ENCODE measurements at regions of chr6 and their contacts with region 1.

Region 1: DNA sequence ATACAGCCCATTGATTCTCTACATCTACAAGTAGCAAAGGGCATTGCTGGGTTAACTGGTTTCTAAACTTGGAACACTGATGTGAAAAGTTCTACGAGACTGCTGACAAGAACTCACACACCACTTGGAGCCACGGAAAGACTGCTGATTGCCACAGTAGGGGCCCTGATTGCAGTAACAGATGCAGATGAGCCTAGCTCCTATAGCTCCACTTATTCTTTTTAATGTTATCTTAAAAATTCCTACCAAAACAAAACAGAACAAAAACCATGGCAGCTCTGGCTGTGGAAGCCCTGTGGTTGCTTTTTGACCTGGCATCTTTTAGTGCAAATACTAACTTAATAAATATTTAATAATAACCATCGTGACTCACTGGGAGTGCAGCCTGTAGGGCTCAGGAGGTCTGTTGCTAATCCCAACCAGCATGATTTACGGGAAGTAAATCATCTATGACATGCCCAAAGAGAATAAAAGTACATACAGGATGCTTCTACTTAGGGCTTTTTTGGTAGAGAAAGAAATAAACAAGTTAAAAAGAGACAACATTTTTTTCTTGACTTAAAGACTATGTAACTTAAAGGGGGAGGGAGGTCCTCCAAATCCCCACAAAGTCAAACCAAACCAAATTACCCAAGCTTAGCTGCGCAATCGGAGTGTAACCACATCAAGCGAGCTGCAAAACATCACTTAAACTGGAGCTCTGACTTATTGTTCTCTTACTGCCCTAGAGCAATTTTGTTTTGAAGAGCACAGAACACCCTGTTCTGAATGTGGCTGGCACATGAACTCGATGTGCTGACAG is 87.2 kb downstream of the FKBP5 start:
- DNase-seq: peak; percentile 82
- ATAC-seq: peak; percentile 84
- H3K4me3 Mint-ChIP-seq: peak overlapping the region; percentile 64
- H3K27ac Mint-ChIP-seq: peak overlapping the region; percentile 86
- H3K4me1 Mint-ChIP-seq: peaks cover 67% of the 10 kb centered on the region
- H3K27me3 Mint-ChIP-seq: no peaks in the 10 kb centered on the region

Region 2: DNA sequence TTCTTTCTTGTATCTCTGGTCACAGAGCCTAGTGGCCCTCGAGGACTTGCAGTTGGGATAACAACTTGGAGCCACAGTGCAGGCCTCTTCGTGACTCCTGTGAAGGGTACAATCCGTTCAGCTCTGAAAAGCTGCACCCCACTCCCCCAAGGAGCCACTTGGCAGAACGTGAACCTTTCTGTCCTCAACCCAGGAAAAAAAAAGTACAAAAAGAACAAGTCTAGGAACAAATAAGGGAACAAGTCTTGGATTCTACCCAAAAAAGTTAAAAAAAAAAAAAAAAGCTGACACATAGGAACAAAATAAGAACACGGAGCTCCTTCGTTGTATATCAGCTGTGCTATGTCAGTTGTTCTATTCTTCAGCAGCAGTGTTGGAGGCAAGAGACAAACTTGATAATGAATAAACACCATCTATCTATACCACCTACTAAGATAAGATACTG is 10.9 kb before region 1 on chr6:
- CTCF ChIA-PET with region 1: interaction called, 40 read pairs
- POLR2A ChIA-PET with region 1: interaction called, 13 read pairs
- DNase-seq: no peak
- ATAC-seq: no peak
- H3K4me3 Mint-ChIP-seq: no peak overlapping the region
- H3K27ac Mint-ChIP-seq: no peak overlapping the region
- H3K4me1 Mint-ChIP-seq: peaks cover 46% of the 10 kb centered on the region
- H3K27me3 Mint-ChIP-seq: no peaks in the 10 kb centered on the region

Region 3: DNA sequence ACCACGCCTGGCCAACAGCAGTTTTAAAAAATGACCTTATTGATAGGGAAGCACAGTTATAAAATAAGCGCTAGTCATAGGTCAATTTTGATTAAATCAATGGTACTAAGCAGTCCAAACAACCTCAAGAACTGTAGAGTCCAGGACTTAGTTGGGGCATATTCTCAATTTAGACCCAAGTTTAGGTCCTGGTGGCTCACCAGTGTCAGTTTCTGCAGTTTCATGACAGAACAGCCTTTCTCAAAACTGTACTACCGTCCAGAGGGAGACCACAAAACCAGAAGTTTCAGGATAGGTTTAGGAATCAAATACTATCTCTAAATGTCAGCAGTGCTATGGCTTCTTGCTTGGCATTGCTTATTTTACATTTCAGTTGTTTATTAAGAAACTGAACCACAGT is 242.8 kb after region 1 on chr6:
- CTCF ChIA-PET with region 1: no interaction called
- POLR2A ChIA-PET with region 1: no interaction called
- DNase-seq: no peak
- ATAC-seq: no peak
- H3K4me3 Mint-ChIP-seq: no peak overlapping the region
- H3K27ac Mint-ChIP-seq: no peak overlapping the region
- H3K4me1 Mint-ChIP-seq: no peaks in the 10 kb centered on the region
- H3K27me3 Mint-ChIP-seq: no peaks in the 10 kb centered on the region